Heart left ventricle (tissue), 16 donors: ENCODE measurements at regions of chr15 and their contacts with region 1.

Region 1: DNA sequence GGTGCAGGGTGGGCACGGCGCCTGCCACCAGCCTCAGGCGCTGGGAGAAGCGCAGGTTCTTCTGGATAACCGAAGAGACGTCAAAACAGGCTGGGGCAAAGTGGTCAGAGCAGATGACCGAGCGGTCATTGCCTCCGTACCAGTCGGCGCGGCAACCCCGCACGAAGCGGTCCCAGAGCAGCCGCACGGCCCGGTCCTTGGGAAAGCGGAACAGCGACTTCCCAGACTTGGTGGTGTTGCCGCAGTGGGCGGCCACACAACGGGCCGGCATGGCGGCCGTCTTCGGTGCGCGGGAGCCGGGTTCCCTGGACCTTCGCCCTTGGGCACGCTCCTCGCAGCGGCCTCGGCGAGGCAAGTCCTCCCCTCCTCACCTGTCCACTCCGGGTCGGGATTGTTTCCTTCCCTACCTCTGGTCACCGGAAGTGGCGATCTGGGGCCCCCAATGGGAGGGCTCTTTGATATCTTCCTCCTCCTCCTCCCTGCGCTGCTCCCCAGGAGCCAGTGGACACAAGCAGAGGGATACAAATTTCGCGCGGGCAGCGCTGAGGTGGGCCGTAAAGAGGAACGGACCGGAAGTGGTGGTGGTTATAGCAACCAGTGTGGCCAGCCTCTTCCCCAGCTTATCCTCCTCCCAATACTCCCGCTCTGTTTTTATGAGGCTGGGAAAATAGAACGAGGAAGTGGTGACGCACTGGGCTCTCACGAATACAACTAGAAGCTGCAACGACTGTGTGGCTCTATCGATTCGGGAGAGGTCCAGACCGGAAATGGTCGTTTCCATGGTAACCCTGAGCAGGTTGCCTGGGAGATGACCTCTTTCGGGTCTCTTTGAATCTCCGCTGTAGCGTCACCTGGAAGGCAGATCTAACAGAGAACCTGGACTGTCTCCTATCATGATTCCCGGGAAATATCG is at the starts of genes LRRC49 and THAP10:
- DNase-seq: peak; percentile 88 to 93 (median 90)
- ATAC-seq: peak; percentile 96 to 99 (median 98)
- H3K4me3 ChIP-seq: peak within 1 kb of the TSS; percentile 33 to 83 (median 74)
- H3K27ac ChIP-seq: peak within 1 kb of the TSS; percentile 19 to 83 (median 68)
- H3K4me1 ChIP-seq: peaks cover 0 to 23% (median 6%) of the 10 kb centered on the region in 12 donors
- H3K27me3 ChIP-seq: peaks cover 0 to 3% (median 0%) of the 10 kb centered on the region in 9 donors
- CTCF ChIP-seq: no peak
- POLR2A ChIP-seq: no peak
- total RNA-seq, gene LRRC49: 22.4 to 123 (median 60.3) TPM
- total RNA-seq, gene THAP10: 2.8 to 5.9 (median 5.1) TPM

Region 2: DNA sequence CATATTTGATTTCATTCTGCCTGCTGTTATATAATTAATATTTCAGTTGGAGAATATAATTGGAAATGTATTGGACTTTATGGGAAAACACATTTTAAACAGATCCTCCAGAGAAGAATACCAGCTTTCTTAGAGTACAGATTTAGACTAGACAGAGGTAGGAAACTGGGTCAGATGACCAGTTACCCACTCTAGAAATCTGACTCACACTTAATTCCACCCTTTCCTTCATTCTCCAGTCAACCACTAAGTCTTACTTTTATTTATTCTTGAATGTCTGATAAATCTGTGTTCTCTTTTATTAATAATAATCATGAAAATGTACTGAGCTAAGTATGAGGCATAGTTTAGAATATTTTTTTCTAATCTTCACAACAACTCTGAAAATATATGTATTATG is 111.1 kb after region 1 on chr15:
- intact Hi-C with region 1: loop called in 1 of 10 experiments (anchors 10 kb)
- DNase-seq: no peak
- ATAC-seq: no peak
- H3K4me3 ChIP-seq: no peak overlapping the region
- H3K27ac ChIP-seq: no peak overlapping the region
- H3K4me1 ChIP-seq: peaks cover 0 to 5% (median 0%) of the 10 kb centered on the region in 12 donors
- H3K27me3 ChIP-seq: no peaks in the 10 kb centered on the region
- CTCF ChIP-seq: no peak
- POLR2A ChIP-seq: no peak

Region 3: DNA sequence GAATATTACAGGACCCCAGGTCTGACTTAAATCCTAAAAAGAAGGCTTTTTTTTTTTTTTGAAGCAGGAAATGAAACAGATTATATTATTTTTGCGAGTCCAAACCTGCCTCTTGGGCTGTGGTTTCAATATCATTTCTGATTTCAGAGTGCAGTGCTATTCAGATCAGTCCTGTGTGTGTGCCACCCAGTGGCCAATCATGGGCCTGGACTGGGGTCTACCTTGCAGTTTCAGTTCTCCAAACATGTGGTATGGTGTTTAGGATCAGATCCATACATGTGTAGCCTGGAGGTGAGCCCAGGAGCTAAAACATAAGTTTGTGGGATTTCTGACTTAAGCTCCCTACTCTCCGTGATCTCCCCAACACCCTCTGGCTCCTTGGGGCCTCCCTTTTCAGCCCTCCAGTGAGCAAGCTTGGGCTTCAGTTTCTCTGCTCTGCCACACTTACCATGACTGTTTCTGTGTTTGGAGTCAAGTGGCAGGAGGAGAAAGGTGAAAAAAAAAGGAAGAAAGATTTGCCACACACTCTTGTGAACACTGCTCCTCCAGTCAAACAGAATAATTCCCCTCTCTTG is 210.9 kb after region 1 on chr15:
- intact Hi-C with region 1: loop called in 8 of 10 experiments (anchors 2 to 10 kb)
- DNase-seq: peak in 1 of 5 donors; percentile 38
- ATAC-seq: peak in 3 of 4 donors; percentile 77 to 80 (median 78)
- H3K4me3 ChIP-seq: no peak overlapping the region
- H3K27ac ChIP-seq: no peak overlapping the region
- H3K4me1 ChIP-seq: peaks cover 0 to 3% (median 0%) of the 10 kb centered on the region in 12 donors
- H3K27me3 ChIP-seq: no peaks in the 10 kb centered on the region
- CTCF ChIP-seq: peak; percentile 18 to 54 (median 42)
- POLR2A ChIP-seq: no peak

Region 4: DNA sequence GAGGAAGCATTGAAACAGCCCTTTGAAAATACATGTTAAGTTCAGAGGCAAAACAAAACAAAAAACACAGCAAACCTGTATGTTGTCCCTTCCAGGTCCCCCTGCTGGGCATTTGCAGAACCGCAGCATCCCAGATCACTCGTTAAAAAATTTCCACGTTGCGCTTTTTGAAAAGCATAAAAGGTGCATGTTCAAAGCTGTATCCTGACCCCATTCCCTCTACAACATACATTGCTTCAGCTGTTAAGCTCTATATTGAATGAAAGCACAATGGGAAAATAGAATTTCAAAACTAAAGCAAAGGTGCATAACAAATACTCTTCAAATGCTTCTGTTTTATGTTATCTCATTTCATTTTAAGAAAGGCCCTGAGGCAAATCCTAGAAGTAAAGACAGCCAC is 551.3 kb after region 1 on chr15:
- intact Hi-C with region 1: loop called in 7 of 10 experiments (anchors 5 to 10 kb)
- DNase-seq: peak in 3 of 5 donors; percentile 40 to 43 (median 42)
- ATAC-seq: peak in 2 of 4 donors; percentile 7 to 10
- H3K4me3 ChIP-seq: no peak overlapping the region
- H3K27ac ChIP-seq: peak overlapping the region in 5 of 12 donors; percentile 13 to 65 (median 41)
- H3K4me1 ChIP-seq: peaks cover 0 to 50% (median 15%) of the 10 kb centered on the region in 12 donors
- H3K27me3 ChIP-seq: no peaks in the 10 kb centered on the region
- CTCF ChIP-seq: peak; percentile 70 to 88 (median 82)
- POLR2A ChIP-seq: no peak